ENCODE measurements at regions of chr6 and their contacts with region 1.

Region 1: GRCh38 chr6:29589423-29590048 is 4.6 kb downstream of the OR2H2 start:
- DNase-seq: peak in 8 of 9 experiments; percentile 16 to 68 (median 53)
- ATAC-seq: peak; percentile 80
- H3K4me3 ChIP-seq: no peak overlapping the region
- H3K4me3 Mint-ChIP-seq: no peak overlapping the region
- H3K27ac ChIP-seq: no peak overlapping the region
- H3K27ac Mint-ChIP-seq: no peak overlapping the region
- H3K4me1 ChIP-seq: no peaks in the 10 kb centered on the region
- H3K4me1 Mint-ChIP-seq: no peaks in the 10 kb centered on the region
- H3K27me3 ChIP-seq: peaks cover 0 to 5% of the 10 kb centered on the region in 2 experiments
- H3K27me3 Mint-ChIP-seq: peaks cover 45% of the 10 kb centered on the region
- CTCF ChIP-seq: peak; percentile 98

Region 2: GRCh38 chr6:28683944-28684538 is 905.5 kb before region 1 on chr6:
- CTCF ChIA-PET with region 1: interaction called, 7 read pairs
- POLR2A ChIA-PET with region 1: no interaction called
- intact Hi-C with region 1: loop called in 1 of 2 experiments (anchors 1 kb)
- DNase-seq: peak in 3 of 9 experiments; percentile 2 to 60 (median 43)
- ATAC-seq: peak; percentile 80
- H3K4me3 ChIP-seq: no peak overlapping the region
- H3K4me3 Mint-ChIP-seq: no peak overlapping the region
- H3K27ac ChIP-seq: no peak overlapping the region
- H3K27ac Mint-ChIP-seq: no peak overlapping the region
- H3K4me1 ChIP-seq: no peaks in the 10 kb centered on the region
- H3K4me1 Mint-ChIP-seq: peaks cover 8% of the 10 kb centered on the region
- H3K27me3 ChIP-seq: peaks cover 7 to 14% of the 10 kb centered on the region in 2 experiments
- H3K27me3 Mint-ChIP-seq: peaks cover 80% of the 10 kb centered on the region
- CTCF ChIP-seq: peak; percentile 62

Region 3: GRCh38 chr6:29577544-29577943 is 12.0 kb before region 1 on chr6:
- CTCF ChIA-PET with region 1: interaction called, 12 read pairs
- POLR2A ChIA-PET with region 1: no interaction called
- intact Hi-C with region 1: no loop called
- DNase-seq: no peak
- ATAC-seq: no peak
- H3K4me3 ChIP-seq: no peak overlapping the region
- H3K4me3 Mint-ChIP-seq: no peak overlapping the region
- H3K27ac ChIP-seq: no peak overlapping the region
- H3K27ac Mint-ChIP-seq: no peak overlapping the region
- H3K4me1 ChIP-seq: no peaks in the 10 kb centered on the region
- H3K4me1 Mint-ChIP-seq: no peaks in the 10 kb centered on the region
- H3K27me3 ChIP-seq: no peaks in the 10 kb centered on the region
- H3K27me3 Mint-ChIP-seq: peaks cover 43% of the 10 kb centered on the region
- CTCF ChIP-seq: no peak